AG04450 (cell line): ENCODE measurements at regions of chr3 and their contacts with region 1.

Region 1: DNA sequence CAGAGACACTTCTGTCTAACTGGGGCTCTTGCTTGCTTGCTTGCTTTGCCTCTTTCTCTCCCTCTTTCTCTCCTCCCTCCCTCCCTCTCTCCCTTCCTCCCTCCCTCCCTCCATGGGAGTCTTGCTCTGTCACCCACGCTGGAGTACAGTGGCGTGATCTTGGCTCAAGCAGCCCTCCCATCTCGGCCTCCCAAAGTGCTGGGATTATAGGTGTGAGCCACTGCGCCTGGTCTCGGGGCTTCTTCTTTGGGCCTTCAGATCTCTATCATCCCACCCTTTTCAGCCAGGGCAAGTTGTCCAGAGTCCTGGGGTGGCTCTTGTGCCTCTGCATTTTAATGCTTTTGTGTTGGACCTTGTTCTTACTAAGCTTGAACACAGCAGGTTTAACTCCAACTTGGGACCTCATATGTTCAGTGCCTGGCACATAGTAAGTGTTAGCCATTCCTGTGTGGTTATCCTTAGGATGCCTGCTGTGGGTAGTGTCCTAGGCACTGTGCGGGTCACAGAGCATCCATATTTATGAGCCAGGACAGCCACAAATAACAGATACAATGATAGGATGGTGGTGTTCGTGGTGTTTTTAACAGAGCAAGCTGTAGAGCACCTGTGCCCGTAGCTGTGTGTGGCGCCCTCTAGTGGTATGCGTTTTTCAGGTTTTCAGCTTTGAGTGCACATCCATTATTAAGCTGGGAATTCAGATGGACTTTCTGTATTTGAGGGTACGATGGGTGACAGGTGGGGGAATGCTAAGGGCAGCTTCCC is 75.1 kb downstream of the CCK start:
- DNase-seq: no peak
- H3K4me3 ChIP-seq: no peak overlapping the region
- H3K27ac ChIP-seq: no peak overlapping the region
- H3K27me3 ChIP-seq: no peaks in the 10 kb centered on the region
- CTCF ChIP-seq: peak; percentile 89

Region 2: GRCh38 chr3:41893977-41894376 is 296.9 kb before region 1 on chr3:
- CTCF ChIA-PET with region 1: interaction called, 40 read pairs
- POLR2A ChIA-PET with region 1: no interaction called
- DNase-seq: no peak
- H3K4me3 ChIP-seq: no peak overlapping the region
- H3K27ac ChIP-seq: no peak overlapping the region
- H3K27me3 ChIP-seq: no peaks in the 10 kb centered on the region
- CTCF ChIP-seq: peak; percentile 51

Region 3: DNA sequence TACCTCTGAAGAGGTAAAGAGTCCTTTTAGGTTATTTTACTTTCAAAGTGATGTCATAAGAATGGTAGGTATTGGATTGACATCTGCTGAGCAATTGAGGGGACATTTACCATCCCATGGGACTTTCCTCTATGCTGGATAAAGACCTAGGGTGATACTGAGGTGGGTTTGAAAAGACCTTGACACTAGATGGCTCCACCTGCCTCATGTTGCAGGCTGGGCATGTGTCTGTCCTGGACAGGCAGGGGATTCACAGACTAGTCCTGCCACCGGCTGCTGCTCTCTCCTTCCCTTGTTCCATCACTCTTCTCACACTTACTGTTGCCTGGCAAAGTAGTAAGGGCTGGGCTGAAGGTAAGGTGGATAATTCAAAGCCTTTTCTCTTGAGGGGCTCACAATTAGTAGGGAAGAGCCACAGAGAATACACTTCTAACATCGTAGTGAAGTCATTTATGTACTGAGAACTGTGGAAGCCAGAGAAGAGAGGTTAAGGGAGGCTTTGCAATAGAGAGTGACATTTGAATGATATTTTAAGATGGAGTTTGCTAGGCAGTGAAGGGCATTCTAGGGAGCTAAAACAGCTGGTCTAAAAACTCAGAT is 72.0 kb before region 1 on chr3:
- CTCF ChIA-PET with region 1: interaction called, 77 read pairs
- POLR2A ChIA-PET with region 1: no interaction called
- DNase-seq: no peak
- H3K4me3 ChIP-seq: no peak overlapping the region
- H3K27ac ChIP-seq: no peak overlapping the region
- H3K27me3 ChIP-seq: no peaks in the 10 kb centered on the region
- CTCF ChIP-seq: peak; percentile 44

Region 4: DNA sequence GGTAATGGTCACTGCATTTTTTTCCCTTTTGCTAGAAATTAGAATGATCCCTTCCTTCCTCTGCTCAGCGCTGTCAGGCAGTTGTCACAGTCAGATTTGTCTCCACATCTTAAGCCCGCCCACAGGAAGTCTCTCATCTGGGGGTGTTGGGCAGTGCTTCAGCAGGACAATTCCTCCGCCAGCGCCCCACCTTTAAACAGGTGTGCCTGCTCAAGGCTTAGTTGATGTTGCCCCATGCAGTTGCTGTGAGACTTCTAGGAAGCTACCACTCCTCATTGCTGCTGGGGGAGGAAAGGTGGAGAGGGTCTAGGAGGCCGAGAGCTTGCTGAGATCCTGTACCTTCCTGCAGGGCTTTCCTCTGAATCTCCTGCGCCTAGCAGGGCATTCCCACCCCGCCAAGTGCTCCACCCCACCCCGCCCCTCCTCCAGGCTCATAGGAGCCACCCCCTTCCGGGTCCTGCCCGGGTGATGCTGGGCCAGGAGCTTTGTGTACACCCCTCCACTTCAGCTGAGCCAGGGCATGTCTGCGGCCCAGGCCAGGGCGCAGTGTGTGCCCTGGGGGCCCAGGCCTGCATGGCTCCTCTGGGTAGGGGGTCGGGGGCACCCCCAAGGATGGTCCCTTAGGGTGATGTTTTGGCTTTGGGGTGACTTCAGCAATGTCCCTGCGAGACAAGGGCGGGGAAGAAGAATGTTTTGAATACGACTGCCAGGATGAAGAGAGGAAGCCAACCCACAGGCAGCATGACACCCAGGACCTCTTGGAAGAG is 31.0 kb before region 1 on chr3:
- CTCF ChIA-PET with region 1: interaction called, 12 read pairs
- POLR2A ChIA-PET with region 1: no interaction called
- DNase-seq: no peak
- H3K4me3 ChIP-seq: peak overlapping the region; percentile 43
- H3K27ac ChIP-seq: peak overlapping the region; percentile 31
- H3K27me3 ChIP-seq: no peaks in the 10 kb centered on the region
- CTCF ChIP-seq: no peak

Region 5: GRCh38 chr3:42179110-42179725 is 11.7 kb before region 1 on chr3:
- CTCF ChIA-PET with region 1: interaction called, 53 read pairs
- POLR2A ChIA-PET with region 1: no interaction called
- DNase-seq: peak; percentile 70
- H3K4me3 ChIP-seq: no peak overlapping the region
- H3K27ac ChIP-seq: peak overlapping the region; percentile 84
- H3K27me3 ChIP-seq: no peaks in the 10 kb centered on the region
- CTCF ChIP-seq: no peak

Region 6: GRCh38 chr3:42214565-42215283 is 23.8 kb after region 1 on chr3:
- CTCF ChIA-PET with region 1: interaction called, 15 read pairs
- POLR2A ChIA-PET with region 1: no interaction called
- DNase-seq: no peak
- H3K4me3 ChIP-seq: no peak overlapping the region
- H3K27ac ChIP-seq: no peak overlapping the region
- H3K27me3 ChIP-seq: no peaks in the 10 kb centered on the region
- CTCF ChIP-seq: no peak